Calu3 (cell line): ENCODE measurements at regions of chr2 and their contacts with region 1.

Region 1: GRCh38 chr2:226048611-226049010 is 649.1 kb downstream of the NYAP2 start:
- DNase-seq: peak; percentile 17
- H3K4me3 Mint-ChIP-seq: no peak overlapping the region
- H3K27ac Mint-ChIP-seq: no peak overlapping the region
- H3K4me1 Mint-ChIP-seq: peaks cover 9% of the 10 kb centered on the region
- H3K27me3 Mint-ChIP-seq: no peaks in the 10 kb centered on the region
- CTCF ChIP-seq: no peak

Region 2: DNA sequence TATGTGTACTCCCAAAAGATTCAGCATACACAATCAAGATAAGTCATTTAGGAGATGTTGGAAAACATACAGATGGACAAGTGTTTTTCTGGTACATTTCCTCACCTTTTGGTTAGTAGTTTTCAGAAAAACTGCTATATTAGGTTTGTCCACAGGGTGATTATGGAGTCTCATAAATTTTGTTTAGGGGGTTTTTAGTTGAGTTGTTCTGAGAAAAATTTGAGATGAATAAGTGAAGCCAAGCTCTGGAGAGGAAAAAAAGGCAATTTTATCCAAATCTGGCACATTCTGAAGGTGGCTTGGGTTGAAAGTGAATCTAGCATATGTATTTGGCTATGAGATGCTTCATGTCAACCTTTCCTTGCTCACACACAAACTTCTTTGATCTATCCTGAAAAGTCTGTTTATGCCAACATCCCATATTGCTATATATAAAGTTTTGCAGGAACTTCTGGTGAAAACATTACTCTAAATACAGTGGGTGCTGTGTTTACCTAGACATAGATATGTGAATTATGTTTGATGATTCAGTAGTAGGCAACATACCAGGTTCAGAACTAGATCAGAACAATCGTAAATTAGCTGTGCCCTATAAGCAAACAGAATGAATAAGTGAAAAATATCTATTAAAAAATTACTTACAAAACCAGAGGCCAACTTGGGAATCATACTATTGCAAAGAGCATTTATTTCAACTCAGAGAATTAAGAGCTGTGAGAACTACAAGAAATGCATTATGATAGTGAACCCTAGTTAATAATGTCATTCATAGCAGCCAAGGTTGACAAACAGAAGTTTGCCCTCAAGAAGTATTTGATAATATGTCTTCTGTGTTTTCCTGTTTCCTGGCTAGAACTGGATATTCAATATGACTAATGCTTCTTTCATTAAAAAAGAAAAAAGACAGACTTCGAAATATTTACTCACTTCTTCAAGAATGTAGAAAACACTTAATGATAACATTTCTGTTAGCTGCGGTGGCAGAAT is 199.0 kb after region 1 on chr2:
- CTCF ChIA-PET with region 1: no interaction called
- intact Hi-C with region 1: loop called (anchors 10 kb)
- DNase-seq: no peak
- H3K4me3 Mint-ChIP-seq: no peak overlapping the region
- H3K27ac Mint-ChIP-seq: peak overlapping the region; percentile 77
- H3K4me1 Mint-ChIP-seq: peaks cover 15% of the 10 kb centered on the region
- H3K27me3 Mint-ChIP-seq: no peaks in the 10 kb centered on the region
- CTCF ChIP-seq: no peak